ENCODE measurements at regions of chr1 and their contacts with region 1.

Region 1: DNA sequence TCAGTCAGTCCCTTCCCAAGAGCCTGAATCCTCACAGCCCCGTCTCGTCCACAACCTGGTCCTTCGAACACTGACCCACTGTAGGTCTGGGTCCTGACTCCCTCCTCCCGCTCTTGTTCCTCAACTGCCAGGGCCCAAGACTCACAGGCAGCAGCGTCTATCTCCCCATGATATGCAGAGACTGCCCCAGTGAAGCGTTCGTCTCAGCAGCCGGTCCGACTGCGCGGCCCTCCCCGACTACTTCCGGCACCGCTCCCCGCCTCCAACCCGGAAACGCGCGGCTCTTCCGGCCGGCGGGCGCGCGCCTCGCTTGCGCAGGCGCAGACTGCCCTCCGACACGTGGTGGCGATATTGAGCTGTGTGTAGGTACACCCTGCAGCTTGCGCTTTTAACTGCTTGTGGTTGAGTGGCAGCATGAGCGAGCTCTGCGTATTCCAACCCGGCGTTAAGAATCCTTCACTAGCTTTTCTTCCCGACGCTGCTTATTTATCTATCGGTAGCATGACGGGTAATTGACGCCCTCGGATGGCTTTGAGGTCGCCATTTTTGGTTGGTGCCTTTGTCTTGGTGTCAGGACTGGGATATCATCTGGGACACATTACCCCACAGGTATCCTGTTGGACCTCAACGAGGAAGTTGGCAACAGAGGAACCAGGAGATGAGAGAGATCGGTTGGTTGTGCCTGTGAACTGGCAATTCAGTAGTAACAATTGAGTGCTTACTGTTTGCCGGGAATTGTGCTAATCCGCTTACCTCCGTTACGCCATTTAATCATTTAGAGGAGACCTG is at the start of gene TAF12:
- DNase-seq: peak; percentile 81 to 85
- H3K4me3 ChIP-seq: peak within 1 kb of the TSS; percentile 91
- H3K27ac ChIP-seq: peak within 1 kb of the TSS; percentile 97
- H3K4me1 ChIP-seq: peaks cover 16% of the 10 kb centered on the region
- H3K27me3 ChIP-seq: no peaks in the 10 kb centered on the region
- CTCF ChIP-seq: no peak; the same call in 1 of the 2 replicates
- total RNA-seq, gene TAF12: 19.9 and 28.4 TPM in 2 replicates

Region 2: GRCh38 chr1:26705788-26706311 is 1937.2 kb before region 1 on chr1:
- CTCF ChIA-PET with region 1: no interaction called
- POLR2A ChIA-PET with region 1: interaction called, 18 read pairs
- intact Hi-C with region 1: no loop called
- DNase-seq: peak; percentile 40 to 94
- H3K4me3 ChIP-seq: peak overlapping the region; percentile 6; the same call in 1 of the 2 replicates
- H3K27ac ChIP-seq: peak overlapping the region; percentile 90
- H3K4me1 ChIP-seq: peaks cover 69% of the 10 kb centered on the region
- H3K27me3 ChIP-seq: no peaks in the 10 kb centered on the region
- CTCF ChIP-seq: no peak

Region 3: GRCh38 chr1:27102707-27103491 is 1540.1 kb before region 1 on chr1:
- CTCF ChIA-PET with region 1: no interaction called
- POLR2A ChIA-PET with region 1: no interaction called
- intact Hi-C with region 1: no loop called
- DNase-seq: peak in 1 of 2 experiments; percentile 71
- H3K4me3 ChIP-seq: no peak overlapping the region
- H3K27ac ChIP-seq: no peak overlapping the region
- H3K4me1 ChIP-seq: 0 out of 2 replicates have a peak, but pooled peaks cover 12% of the 10 kb centered on the region
- H3K27me3 ChIP-seq: no peaks in the 10 kb centered on the region
- CTCF ChIP-seq: peak; percentile 93

Region 4: GRCh38 chr1:28518000-28518744 is 124.9 kb before region 1 on chr1:
- CTCF ChIA-PET with region 1: no interaction called
- POLR2A ChIA-PET with region 1: no interaction called
- intact Hi-C with region 1: loop called (anchors 2 kb)
- DNase-seq: peak; percentile 66 to 93
- H3K4me3 ChIP-seq: peak overlapping the region; percentile 93
- H3K27ac ChIP-seq: peak overlapping the region; percentile 78
- H3K4me1 ChIP-seq: peaks cover 19% of the 10 kb centered on the region
- H3K27me3 ChIP-seq: no peaks in the 10 kb centered on the region
- CTCF ChIP-seq: peak; percentile 94

Region 5: DNA sequence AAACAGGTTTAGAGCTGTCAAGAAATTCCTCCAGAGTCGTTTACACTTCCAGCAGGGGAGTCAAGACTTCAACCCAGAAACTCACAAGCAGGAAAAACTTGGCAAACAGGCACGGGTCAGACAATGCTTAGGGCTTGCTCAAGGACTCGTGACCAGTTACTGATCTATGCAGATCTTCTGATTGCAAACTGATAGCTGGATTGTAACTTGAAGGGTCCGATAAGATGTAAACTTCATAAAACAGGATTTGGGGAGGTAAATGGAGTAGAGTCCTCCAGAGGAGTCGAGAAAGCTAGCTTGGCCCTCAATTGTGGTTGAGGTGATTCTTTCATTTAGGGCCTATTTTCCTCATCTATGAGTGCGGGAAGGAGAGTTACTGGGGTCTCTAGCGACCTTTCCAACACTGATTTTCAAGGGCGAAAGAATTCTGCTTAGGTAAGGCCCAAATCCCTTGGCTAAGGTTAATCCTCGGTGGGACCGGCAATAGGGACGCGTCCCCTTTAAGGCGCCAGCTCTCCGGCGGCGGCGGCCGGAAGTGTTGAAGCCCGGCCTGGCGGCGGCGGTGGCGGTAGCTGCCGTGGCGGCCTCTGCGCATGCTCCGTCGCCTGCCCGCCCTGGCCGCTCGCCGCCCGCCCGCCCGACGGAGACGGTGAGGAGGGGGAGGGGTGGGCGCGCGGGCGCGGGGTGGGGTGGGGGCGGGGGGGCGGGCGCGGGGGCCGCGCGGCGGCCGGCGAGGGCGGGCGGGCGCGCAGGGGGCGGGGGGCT is 25.3 kb after region 1 on chr1 and contains the start of gene GMEB1:
- CTCF ChIA-PET with region 1: no interaction called
- POLR2A ChIA-PET with region 1: interaction called, 10 read pairs
- intact Hi-C with region 1: no loop called
- DNase-seq: peak; percentile 69 to 85
- H3K4me3 ChIP-seq: peak within 1 kb of the TSS; percentile 80
- H3K27ac ChIP-seq: peak within 1 kb of the TSS; percentile 75
- H3K4me1 ChIP-seq: no peaks in the 10 kb centered on the region
- H3K27me3 ChIP-seq: no peaks in the 10 kb centered on the region
- CTCF ChIP-seq: no peak
- total RNA-seq, gene GMEB1: 8.9 and 9.7 TPM in 2 replicates

Region 6: DNA sequence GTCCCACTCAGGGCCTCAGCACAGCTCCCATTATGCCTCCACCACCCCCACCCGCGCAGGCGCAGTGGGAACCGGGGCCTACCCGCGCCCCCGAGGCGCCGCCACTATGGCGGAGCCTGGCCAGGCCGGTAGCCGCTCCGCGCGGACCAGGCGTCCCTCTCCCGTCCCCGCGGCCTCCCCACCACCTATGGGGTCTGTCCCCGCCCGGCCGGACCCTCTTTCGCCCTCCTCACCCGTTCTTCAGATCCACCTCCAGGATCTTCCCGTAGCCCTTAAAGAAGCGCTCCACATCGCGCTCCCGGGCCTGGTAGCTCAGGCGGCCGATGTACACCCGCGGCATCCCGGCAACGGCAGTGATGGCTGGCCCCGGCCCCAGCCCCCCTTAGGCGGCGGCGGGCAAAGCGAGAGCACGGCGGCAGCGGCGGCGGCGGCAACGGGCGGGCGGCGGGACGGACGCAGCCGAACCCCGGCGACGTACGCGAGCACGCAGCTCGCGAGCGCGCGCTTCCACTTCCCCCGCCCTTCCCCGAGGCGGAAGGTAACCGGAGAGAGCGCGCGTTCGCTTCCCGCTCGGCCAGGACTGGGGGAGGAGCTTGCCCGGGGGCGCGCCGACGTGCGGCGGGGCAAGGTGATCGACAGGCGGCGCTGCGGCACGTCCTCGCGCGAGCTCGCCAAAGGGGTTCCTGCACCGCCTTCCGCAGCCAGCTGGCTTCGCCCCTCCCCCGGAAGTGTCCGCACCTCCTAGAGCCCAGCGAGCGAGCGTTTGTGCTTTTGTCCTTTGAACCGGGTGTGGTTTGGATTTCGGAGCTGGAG is 538.6 kb after region 1 on chr1 and contains the start of gene SRSF4:
- CTCF ChIA-PET with region 1: no interaction called
- POLR2A ChIA-PET with region 1: interaction called, 27 read pairs
- intact Hi-C with region 1: no loop called
- DNase-seq: peak; percentile 86 to 99
- H3K4me3 ChIP-seq: peak within 1 kb of the TSS; percentile 92
- H3K27ac ChIP-seq: peak within 1 kb of the TSS; percentile 88
- H3K4me1 ChIP-seq: peaks cover 33% of the 10 kb centered on the region
- H3K27me3 ChIP-seq: no peaks in the 10 kb centered on the region
- CTCF ChIP-seq: peak; percentile 60
- total RNA-seq, gene SRSF4: 75.7 and 87.6 TPM in 2 replicates

Region 7: GRCh38 chr1:29202584-29203340 is 559.7 kb after region 1 on chr1:
- CTCF ChIA-PET with region 1: no interaction called
- POLR2A ChIA-PET with region 1: no interaction called
- intact Hi-C with region 1: loop called (anchors 10 kb)
- DNase-seq: peak; percentile 89 to 90
- H3K4me3 ChIP-seq: peak overlapping the region; percentile 23; the same call in 1 of the 2 replicates
- H3K27ac ChIP-seq: peak overlapping the region; percentile 63
- H3K4me1 ChIP-seq: peaks cover 9% of the 10 kb centered on the region
- H3K27me3 ChIP-seq: no peaks in the 10 kb centered on the region
- CTCF ChIP-seq: peak; percentile 87